ENCODE measurements at regions of chr17 and their contacts with region 1.

Region 1: GRCh38 chr17:28963841-28964240 is 12.5 kb upstream of the PHF12 start:
- DNase-seq: no peak
- H3K4me3 ChIP-seq: no peak overlapping the region
- H3K27ac ChIP-seq: no peak overlapping the region
- H3K4me1 ChIP-seq: peaks cover 0 to 17% (median 4%) of the 10 kb centered on the region in 4 donors
- H3K27me3 ChIP-seq: peaks cover 0 to 12% (median 0%) of the 10 kb centered on the region in 4 donors
- CTCF ChIP-seq: no peak
- EP300 ChIP-seq: no peak
- POLR2A ChIP-seq: no peak

Region 2: DNA sequence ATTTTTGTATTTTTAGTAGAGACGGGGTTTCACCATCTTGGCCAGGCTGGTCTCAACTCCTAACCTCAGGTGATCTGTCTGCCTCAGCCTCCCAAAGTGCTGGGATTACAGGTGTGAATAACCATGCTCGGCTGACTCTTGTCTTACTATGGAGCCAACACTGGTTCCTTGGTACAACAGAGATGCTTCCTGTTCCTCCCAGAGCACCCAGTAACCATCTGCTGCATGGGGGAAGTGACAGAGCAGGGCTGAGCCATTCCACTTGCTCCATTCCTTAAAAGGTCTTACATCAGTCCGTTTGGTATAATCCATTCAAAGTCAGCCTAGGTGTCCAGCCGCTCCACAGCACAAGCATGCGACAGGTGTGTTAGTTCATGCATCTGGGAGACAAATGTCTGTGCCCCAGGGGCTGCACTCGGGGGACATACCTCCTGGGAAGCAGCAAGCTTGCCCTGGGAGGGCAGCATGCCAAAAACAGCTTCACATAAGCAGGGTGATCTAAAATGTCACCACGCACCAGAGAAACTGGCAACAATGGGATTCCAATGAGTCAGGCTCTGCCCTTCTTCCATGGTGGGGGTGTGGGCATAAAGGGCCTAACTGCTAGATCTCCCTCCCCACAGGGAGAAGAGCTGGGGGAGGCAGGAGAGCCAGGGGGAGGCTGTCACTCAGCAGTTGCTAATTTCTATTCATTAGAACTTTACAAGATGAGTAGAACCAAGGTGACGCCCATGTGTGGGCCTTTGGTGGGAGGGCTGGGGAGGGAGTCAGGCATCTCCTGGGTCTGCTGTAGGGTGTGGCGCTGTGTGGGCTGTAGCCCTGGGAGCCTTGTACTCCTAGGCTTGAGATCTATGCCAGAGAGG is 114.6 kb after region 1 on chr17:
- intact Hi-C with region 1: no loop called
- DNase-seq: no peak
- H3K4me3 ChIP-seq: no peak overlapping the region
- H3K27ac ChIP-seq: no peak overlapping the region
- H3K4me1 ChIP-seq: peaks cover 0 to 19% (median 0%) of the 10 kb centered on the region in 4 donors
- H3K27me3 ChIP-seq: no peaks in the 10 kb centered on the region
- CTCF ChIP-seq: no peak
- EP300 ChIP-seq: no peak
- POLR2A ChIP-seq: no peak

Region 3: GRCh38 chr17:29111816-29112499 is 148.1 kb after region 1 on chr17:
- intact Hi-C with region 1: loop called (anchors 2 kb)
- DNase-seq: no peak
- H3K4me3 ChIP-seq: no peak overlapping the region
- H3K27ac ChIP-seq: no peak overlapping the region
- H3K4me1 ChIP-seq: peaks cover 23 to 35% (median 28%) of the 10 kb centered on the region in 4 donors
- H3K27me3 ChIP-seq: no peaks in the 10 kb centered on the region
- CTCF ChIP-seq: peak; percentile 78 to 93 (median 81)
- EP300 ChIP-seq: no peak
- POLR2A ChIP-seq: no peak

Measured in esophagus muscularis mucosa (tissue), 4 donors.